ENCODE measurements at regions of chr1 and their contacts with region 1.

Region 1: GRCh38 chr1:212981571-212982328 is 31.4 kb downstream of the VASH2 start:
- DNase-seq: no peak
- H3K4me3 ChIP-seq: no peak overlapping the region
- H3K27ac ChIP-seq: peak overlapping the region; percentile 50 to 56
- H3K4me1 ChIP-seq: no peaks in the 10 kb centered on the region
- H3K27me3 ChIP-seq: no peaks in the 10 kb centered on the region
- CTCF ChIP-seq: no peak
- POLR2A ChIP-seq: no peak

Region 2: DNA sequence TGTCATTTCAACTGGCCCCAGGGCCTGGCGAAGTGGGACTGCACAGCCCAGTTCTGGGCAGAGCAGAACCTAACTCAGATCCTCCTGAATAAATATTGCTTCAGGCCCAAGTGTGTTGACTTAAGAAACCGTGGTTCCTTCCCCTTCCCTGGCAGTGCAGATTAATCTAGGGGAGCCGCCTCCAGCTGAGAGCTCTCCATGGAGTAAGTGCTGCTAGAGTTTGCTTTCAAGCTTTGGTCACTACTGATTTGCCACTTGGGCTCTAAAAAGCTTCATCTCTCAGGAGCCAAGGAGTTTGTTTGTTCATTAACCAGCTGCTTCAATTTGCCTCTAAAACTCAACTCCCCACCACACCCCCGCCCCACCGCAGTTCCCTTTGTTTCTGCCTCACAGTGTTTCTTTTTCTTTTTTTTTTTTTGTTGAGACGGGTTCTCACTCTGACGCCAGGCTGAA is 834.1 kb before region 1 on chr1:
- intact Hi-C with region 1: loop called (anchors 5 kb)
- DNase-seq: peak; percentile 44 to 79
- H3K4me3 ChIP-seq: no peak overlapping the region
- H3K27ac ChIP-seq: peak overlapping the region; percentile 27 to 45
- H3K4me1 ChIP-seq: no peaks in the 10 kb centered on the region
- H3K27me3 ChIP-seq: no peaks in the 10 kb centered on the region
- CTCF ChIP-seq: no peak
- POLR2A ChIP-seq: no peak

Region 3: DNA sequence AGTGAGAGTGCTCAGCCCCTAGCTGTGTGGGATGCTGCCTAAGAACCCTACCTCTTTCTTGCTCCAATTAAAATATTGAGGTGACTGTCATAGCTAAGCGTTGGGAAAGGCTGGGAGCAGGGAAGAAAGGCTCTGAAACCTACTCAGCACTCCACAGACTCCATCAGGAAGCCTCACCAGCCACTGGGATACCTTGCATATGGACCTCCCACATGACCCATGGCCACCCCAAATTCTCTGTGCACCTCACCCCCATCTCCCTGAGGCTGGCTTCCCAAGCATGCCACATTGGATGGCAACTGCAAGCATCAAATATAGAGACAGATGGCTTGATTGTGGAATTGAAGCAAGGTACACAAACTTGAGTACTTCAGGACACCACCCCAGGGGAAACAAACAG is 81.9 kb before region 1 on chr1:
- intact Hi-C with region 1: no loop called
- DNase-seq: no peak
- H3K4me3 ChIP-seq: no peak overlapping the region
- H3K27ac ChIP-seq: no peak overlapping the region
- H3K4me1 ChIP-seq: no peaks in the 10 kb centered on the region
- H3K27me3 ChIP-seq: no peaks in the 10 kb centered on the region
- CTCF ChIP-seq: no peak
- POLR2A ChIP-seq: no peak

Measured in breast epithelium (tissue), 4 donors.